Breast epithelium (tissue), 4 donors: ENCODE measurements at regions of chr5 and their contacts with region 1.

Region 1: DNA sequence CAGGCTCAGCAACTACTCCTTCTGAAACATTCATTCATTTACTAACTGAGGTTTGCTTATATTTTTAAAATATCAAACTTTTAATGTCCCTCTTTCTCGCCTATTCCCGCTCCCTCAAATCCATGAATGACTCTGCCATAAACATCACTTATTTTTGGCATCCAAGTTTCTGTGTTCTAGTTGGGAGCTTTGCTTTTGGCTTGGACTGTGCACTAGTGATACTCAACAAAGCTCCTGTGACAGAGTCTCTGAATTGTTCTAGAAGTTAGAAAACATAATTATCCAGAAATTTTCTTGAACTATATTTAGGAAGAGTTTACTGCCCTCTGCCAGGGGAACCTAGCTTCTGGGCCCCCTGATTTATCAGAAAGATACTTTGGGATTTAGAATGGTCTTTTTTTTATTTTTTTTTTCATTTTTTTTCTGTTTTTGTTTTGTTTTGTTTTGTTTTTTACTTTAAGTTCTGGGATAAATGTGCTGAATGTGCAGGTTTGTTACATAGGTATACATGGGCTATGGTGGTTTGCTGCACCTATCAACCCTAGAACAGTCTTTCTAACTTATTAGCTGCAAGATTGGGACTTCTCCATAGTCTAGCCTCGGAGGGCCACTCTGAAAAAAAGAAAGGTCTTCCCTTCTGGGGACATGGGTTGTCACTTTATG is 64.7 kb upstream of the PTGER4 start:
- DNase-seq: no peak
- H3K4me3 ChIP-seq: no peak overlapping the region
- H3K27ac ChIP-seq: no peak overlapping the region
- H3K4me1 ChIP-seq: no peaks in the 10 kb centered on the region
- H3K27me3 ChIP-seq: no peaks in the 10 kb centered on the region
- CTCF ChIP-seq: no peak
- POLR2A ChIP-seq: no peak

Region 2: DNA sequence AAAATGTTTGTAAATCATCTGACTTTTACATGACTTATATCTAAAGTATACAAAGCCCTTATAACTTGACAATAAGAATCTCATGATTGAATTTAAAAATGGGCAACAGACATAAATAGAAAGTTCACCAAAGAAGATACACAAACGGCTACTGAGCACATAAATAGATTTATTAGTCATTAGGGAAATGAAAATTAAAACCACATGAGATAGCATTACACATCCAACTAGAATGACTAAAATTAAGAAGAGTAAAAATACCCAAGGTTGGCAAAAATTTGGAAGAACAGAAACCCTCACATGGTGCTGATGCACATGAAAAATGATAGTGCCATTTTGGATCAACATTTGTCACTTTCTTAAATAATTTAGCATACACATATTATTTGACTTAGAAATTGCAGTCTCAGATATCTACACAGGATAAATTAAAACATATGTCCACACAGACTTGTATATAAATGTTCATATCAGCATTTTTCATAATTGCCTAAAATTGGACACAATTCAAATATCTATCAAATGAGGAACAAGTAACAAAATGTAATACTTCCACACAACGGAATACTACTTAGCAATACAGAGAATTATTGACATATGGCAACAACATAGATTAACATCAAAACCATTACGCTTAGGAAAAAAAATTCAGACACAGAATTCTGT is 831.2 kb before region 1 on chr5:
- intact Hi-C with region 1: loop called (anchors 5 kb)
- DNase-seq: no peak
- H3K4me3 ChIP-seq: no peak overlapping the region
- H3K27ac ChIP-seq: no peak overlapping the region
- H3K4me1 ChIP-seq: no peaks in the 10 kb centered on the region
- H3K27me3 ChIP-seq: no peaks in the 10 kb centered on the region
- CTCF ChIP-seq: no peak
- POLR2A ChIP-seq: no peak

Region 3: DNA sequence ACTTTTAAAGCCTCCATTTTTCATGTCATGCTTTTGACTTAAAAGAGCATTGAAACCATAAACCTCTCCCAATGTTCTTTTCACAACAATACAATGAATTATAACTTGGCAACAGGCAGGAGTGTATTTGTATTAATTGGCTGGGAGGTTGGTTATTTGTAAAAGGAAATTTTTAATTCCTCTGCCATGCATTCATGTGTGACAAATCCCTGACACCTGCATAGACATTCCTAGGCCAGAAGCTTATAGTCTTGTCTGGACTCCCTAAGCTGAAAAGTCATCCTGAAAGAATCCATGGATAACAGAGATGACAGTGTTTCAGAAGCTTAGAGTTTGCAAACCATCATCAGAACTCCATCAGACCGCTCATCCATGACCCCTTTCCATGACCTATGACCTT is 11.7 kb before region 1 on chr5:
- intact Hi-C with region 1: no loop called
- DNase-seq: no peak
- H3K4me3 ChIP-seq: no peak overlapping the region
- H3K27ac ChIP-seq: no peak overlapping the region
- H3K4me1 ChIP-seq: no peaks in the 10 kb centered on the region
- H3K27me3 ChIP-seq: no peaks in the 10 kb centered on the region
- CTCF ChIP-seq: no peak
- POLR2A ChIP-seq: no peak

Region 4: GRCh38 chr5:40762705-40763104 is 147.7 kb after region 1 on chr5:
- intact Hi-C with region 1: no loop called
- DNase-seq: no peak
- H3K4me3 ChIP-seq: no peak overlapping the region
- H3K27ac ChIP-seq: no peak overlapping the region
- H3K4me1 ChIP-seq: no peaks in the 10 kb centered on the region
- H3K27me3 ChIP-seq: no peaks in the 10 kb centered on the region
- CTCF ChIP-seq: no peak
- POLR2A ChIP-seq: no peak